Heart left ventricle (tissue), 16 donors: ENCODE measurements at regions of chr9 and their contacts with region 1.

Region 1: GRCh38 chr9:132406554-132407122 is at the start of gene TTF1:
- DNase-seq: peak; percentile 91 to 95 (median 94)
- ATAC-seq: peak; percentile 74 to 83 (median 77)
- H3K4me3 ChIP-seq: peak within 1 kb of the TSS; percentile 49 to 99 (median 80)
- H3K27ac ChIP-seq: peak within 1 kb of the TSS; percentile 37 to 91 (median 74)
- H3K4me1 ChIP-seq: peaks cover 0 to 72% (median 44%) of the 10 kb centered on the region in 12 donors
- H3K27me3 ChIP-seq: peaks cover 0 to 27% (median 13%) of the 10 kb centered on the region in 9 donors
- CTCF ChIP-seq: no peak
- POLR2A ChIP-seq: peak in 1 of 2 donors; percentile 40
- total RNA-seq, gene TTF1: 13.0 to 20.3 (median 16.5) TPM

Region 2: DNA sequence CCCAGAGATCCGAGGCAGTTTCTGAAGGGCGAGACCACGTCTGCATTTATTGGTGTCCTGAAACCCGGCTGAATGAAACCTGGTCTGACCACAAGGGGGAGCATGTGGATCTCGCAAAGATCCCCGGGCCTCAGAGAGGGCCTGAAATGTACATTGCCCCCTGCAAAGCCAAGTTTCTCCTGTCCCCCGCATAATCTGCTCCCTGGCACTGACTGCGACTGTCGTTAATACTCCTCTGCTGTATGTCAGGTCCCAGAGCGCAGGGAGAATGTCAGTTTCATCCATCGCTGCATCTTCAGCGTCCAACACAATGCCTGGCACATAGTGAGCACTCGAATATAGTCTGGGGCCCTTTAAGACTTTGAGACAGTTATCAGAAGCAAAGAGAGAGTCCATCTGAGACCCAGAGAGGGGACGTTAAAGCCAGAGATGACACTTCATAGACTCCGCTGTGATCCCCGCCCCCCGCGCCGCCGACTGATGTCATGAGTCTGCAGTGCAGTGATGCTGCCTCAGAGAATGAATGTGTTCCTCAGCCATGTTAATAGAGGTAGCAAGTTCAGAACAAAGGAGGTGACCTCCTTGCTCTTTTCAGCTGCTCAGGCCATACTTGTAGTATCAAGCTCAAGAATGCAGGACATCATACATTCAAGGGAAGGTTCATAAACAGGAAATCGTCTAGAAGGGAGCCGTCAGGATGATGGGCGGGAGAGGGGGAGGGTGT is 101.3 kb after region 1 on chr9:
- intact Hi-C with region 1: loop called in 1 of 10 experiments (anchors 10 kb)
- DNase-seq: peak in 4 of 5 donors; percentile 38 to 56 (median 53)
- ATAC-seq: peak; percentile 49 to 71 (median 60)
- H3K4me3 ChIP-seq: no peak overlapping the region
- H3K27ac ChIP-seq: no peak overlapping the region
- H3K4me1 ChIP-seq: peaks cover 0 to 4% (median 0%) of the 10 kb centered on the region in 12 donors
- H3K27me3 ChIP-seq: peaks cover 0 to 36% (median 3%) of the 10 kb centered on the region in 9 donors
- CTCF ChIP-seq: peak; percentile 62 to 81 (median 74)
- POLR2A ChIP-seq: no peak

Region 3: DNA sequence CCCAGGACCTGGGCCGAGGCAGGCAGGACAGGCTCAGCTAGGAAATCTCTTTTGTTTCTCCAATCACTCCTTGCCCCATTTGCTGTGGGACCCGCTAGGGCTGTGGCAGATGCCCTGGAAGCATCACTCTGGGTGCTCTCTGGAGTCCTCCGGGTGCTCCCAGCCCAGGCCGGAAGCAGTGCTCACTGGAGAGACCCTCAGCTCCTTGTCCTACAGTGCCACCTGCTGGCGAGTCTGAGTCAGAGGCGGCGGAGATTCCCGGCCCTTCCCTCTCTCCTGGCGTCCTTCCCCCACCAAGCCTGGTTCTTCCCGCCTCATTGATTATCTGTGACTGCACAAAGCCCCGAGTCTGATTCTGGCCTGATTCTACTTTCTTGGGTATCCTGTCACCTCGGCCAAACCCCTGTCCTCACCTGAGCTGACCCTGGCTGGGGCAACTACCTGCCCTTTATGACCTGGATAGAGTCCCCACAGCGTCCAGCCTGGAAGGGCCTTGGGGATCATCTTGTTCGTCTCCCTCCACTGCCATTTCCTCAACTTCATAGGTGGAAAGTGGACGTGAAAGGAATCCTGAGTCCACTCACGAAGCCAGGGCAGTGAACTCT is 168.5 kb after region 1 on chr9:
- intact Hi-C with region 1: loop called in 8 of 10 experiments (anchors 1 to 5 kb)
- DNase-seq: peak; percentile 54 to 83 (median 66)
- ATAC-seq: peak; percentile 59 to 91 (median 85)
- H3K4me3 ChIP-seq: no peak overlapping the region
- H3K27ac ChIP-seq: no peak overlapping the region
- H3K4me1 ChIP-seq: peaks cover 0 to 5% (median 0%) of the 10 kb centered on the region in 12 donors
- H3K27me3 ChIP-seq: peaks cover 22 to 64% (median 34%) of the 10 kb centered on the region in 9 donors
- CTCF ChIP-seq: peak; percentile 53 to 82 (median 70)
- POLR2A ChIP-seq: no peak

Region 4: DNA sequence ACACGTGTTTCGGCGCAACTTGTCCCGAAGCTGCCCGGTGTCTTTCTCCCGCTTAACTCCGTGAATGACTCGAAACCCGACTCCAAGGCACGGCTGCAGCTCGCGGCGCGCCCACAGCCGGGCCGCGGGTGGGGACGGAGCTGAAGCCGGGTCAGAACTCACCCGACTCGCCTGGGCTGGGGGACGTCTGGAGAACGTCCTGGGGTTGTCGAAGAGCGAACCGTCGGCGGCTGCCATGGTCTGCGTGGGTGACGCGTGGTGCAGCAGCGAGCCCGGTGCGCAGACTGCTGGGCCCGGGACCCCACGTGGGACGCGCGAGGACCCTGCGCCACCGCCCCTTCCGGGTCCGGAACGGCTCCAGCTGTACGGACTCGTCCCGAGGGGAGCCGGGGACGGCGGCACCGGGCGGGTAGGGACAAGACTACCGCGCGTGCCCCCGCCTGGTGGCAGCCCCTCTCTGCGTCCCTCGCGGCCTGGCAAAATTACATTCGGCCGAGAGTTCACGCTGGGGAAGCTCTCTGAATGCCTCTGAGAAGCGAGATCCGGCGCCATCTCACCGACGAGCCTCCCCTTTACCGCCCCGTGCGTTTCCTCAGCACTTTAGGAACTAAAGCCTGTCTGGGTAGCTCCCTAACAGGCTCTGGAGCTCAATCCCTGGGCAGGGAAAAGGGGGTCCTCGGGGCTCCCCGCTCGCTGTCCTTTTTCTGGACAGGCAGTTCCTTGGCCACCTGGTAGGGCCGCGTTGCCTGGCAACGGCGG is 263.2 kb after region 1 on chr9 and contains the start of gene DDX31:
- intact Hi-C with region 1: loop called in 2 of 10 experiments (anchors 10 kb)
- DNase-seq: peak; percentile 88 to 93 (median 90)
- ATAC-seq: peak; percentile 97 to 99 (median 98)
- H3K4me3 ChIP-seq: peak within 1 kb of the TSS; percentile 61 to 98 (median 88)
- H3K27ac ChIP-seq: peak within 1 kb of the TSS; percentile 80 to 100 (median 97)
- H3K4me1 ChIP-seq: peaks cover 0 to 44% (median 27%) of the 10 kb centered on the region in 12 donors
- H3K27me3 ChIP-seq: no peaks in the 10 kb centered on the region
- CTCF ChIP-seq: no peak
- POLR2A ChIP-seq: peak in 1 of 2 donors; percentile 34
- total RNA-seq, gene DDX31: 4.4 to 7.0 (median 5.1) TPM

Region 5: GRCh38 chr9:132973713-132974112 is 567.1 kb after region 1 on chr9:
- intact Hi-C with region 1: loop called in 1 of 10 experiments (anchors 5 kb)
- DNase-seq: no peak
- ATAC-seq: no peak
- H3K4me3 ChIP-seq: no peak overlapping the region
- H3K27ac ChIP-seq: no peak overlapping the region
- H3K4me1 ChIP-seq: peaks cover 0 to 11% (median 0%) of the 10 kb centered on the region in 12 donors
- H3K27me3 ChIP-seq: peaks cover 0 to 39% (median 8%) of the 10 kb centered on the region in 9 donors
- CTCF ChIP-seq: no peak
- POLR2A ChIP-seq: no peak